Vagina (tissue), 2 donors: ENCODE measurements at regions of chr14 and their contacts with region 1.

Region 1: DNA sequence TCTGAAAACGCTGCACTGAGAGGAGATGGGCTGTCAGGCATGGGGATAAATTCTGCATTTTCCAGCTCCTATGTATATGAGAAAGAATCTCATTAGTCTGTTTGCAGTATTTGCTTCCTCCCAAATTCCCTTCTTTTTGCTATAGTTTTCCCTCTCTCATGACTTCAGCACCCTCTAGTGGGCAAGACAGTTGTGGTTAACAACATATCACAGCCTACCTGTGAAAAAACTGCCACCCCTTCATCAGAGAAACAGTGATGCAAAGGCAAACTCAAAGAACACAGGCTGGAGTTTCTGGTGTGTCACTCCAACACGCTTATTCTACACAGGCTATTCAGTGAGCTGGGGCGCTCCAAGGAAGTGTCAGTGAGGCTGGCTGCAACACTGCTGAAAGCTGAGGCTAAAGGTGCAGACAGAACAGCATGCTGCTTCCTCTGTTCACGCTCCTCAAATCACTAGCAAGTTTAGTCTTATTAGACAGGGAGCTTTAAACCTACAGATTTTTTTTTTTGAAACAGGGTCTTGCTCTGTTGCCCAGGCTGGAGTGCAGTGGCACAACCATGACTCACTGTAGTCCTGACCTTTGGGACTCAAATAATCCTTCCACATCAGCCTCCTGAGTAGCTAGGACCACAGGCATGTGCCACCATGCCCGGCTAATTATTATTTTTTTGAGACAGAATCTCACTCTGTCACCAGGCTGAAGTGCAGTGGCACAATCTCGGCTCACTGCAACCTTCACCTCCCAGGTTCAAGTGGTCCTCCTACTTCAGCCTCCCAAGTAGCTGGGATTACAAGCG is 19.3 kb downstream of the ZC2HC1C start:
- DNase-seq: no peak
- H3K4me3 ChIP-seq: no peak overlapping the region
- H3K27ac ChIP-seq: no peak overlapping the region
- H3K4me1 ChIP-seq: no peaks in the 10 kb centered on the region
- H3K27me3 ChIP-seq: no peaks in the 10 kb centered on the region
- CTCF ChIP-seq: peak; percentile 61 to 83 (median 80)
- POLR2A ChIP-seq: no peak

Region 2: GRCh38 chr14:74913986-74914573 is 174.7 kb before region 1 on chr14:
- intact Hi-C with region 1: loop called (anchors 10 kb)
- DNase-seq: no peak
- H3K4me3 ChIP-seq: no peak overlapping the region
- H3K27ac ChIP-seq: peak overlapping the region; percentile 37
- H3K4me1 ChIP-seq: peaks cover 44% of the 10 kb centered on the region
- H3K27me3 ChIP-seq: no peaks in the 10 kb centered on the region
- CTCF ChIP-seq: peak; percentile 53 to 68 (median 58)
- POLR2A ChIP-seq: no peak

Region 3: GRCh38 chr14:74955229-74956026 is 133.3 kb before region 1 on chr14 and contains the start of gene PGF:
- intact Hi-C with region 1: loop called (anchors 5 kb)
- DNase-seq: no peak
- H3K4me3 ChIP-seq: peak within 1 kb of the TSS; percentile 56 to 62
- H3K27ac ChIP-seq: peak within 1 kb of the TSS; percentile 54
- H3K4me1 ChIP-seq: peaks cover 24% of the 10 kb centered on the region
- H3K27me3 ChIP-seq: no peaks in the 10 kb centered on the region
- CTCF ChIP-seq: no peak
- POLR2A ChIP-seq: peak in 1 of 2 donors; percentile 63
- total RNA-seq, gene PGF: 8.3 TPM

Region 4: GRCh38 chr14:75032939-75033338 is 55.8 kb before region 1 on chr14:
- intact Hi-C with region 1: loop called (anchors 10 kb)
- DNase-seq: no peak
- H3K4me3 ChIP-seq: no peak overlapping the region
- H3K27ac ChIP-seq: no peak overlapping the region
- H3K4me1 ChIP-seq: no peaks in the 10 kb centered on the region
- H3K27me3 ChIP-seq: no peaks in the 10 kb centered on the region
- CTCF ChIP-seq: no peak
- POLR2A ChIP-seq: no peak